ENCODE measurements at regions of chr18 and their contacts with region 1.

Region 1: GRCh38 chr18:64264171-64264570 is 115.3 kb upstream of the LINC00305 start:
- DNase-seq: no peak

Region 2: GRCh38 chr18:64201781-64202180 is 62.4 kb before region 1 on chr18:
- intact Hi-C with region 1: no loop called
- DNase-seq: no peak

Region 3: GRCh38 chr18:64253873-64254272 is 10.3 kb before region 1 on chr18:
- intact Hi-C with region 1: loop called in 1 of 2 experiments (anchors 1 kb)
- DNase-seq: no peak

Measured in posterior vena cava (tissue), 2 donors.